ENCODE measurements at regions of chr17 and their contacts with region 1.

Region 1: DNA sequence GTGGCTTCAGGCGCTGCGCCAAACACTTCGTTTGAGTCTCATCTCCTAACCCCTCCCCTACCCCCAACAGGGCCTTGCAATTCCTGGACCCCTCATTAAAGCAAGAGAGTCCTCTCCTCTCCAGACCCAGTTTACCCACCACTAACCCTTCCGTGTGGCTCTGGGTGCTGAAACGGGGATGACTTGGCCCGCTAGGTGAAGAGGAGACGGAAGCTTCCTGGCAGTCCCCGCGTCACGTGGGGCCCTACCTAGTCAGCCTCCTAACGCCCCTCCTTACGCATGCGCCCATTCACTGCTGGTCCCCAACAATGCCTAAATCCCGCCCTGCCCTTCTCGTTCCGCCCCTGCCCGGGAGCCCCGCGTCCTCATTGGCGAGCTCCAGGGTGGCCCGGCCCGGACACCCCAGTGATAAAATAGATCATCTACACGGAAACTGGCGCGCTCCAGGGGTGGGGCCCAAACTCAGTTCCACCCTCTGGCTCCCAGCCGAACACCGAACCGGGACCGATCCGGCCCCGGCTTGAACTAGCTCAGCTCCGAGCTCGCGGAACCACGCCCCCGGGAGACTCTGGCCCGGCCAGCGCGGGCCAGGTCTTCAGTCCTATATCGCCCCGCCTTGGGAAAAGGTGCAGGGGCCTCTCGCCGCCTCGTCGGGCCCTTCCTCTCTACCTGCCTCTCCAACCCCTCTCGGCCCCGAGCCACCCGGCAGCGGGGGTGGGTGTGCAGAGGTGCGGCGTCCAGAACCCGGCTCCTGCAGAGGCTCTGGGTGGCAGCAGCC is at the start of gene SLC16A13:
- DNase-seq: peak; percentile 99
- H3K4me3 Mint-ChIP-seq: peak within 1 kb of the TSS; percentile 92
- H3K27ac Mint-ChIP-seq: peak within 1 kb of the TSS; percentile 92
- H3K4me1 Mint-ChIP-seq: peaks cover 21% of the 10 kb centered on the region
- H3K27me3 Mint-ChIP-seq: no peaks in the 10 kb centered on the region
- CTCF ChIP-seq: no peak
- total RNA-seq, gene SLC16A13: 7.5 and 11.1 TPM in 2 replicates

Region 2: GRCh38 chr17:6969323-6969726 is 66.5 kb before region 1 on chr17:
- CTCF ChIA-PET with region 1: no interaction called
- POLR2A ChIA-PET with region 1: no interaction called
- intact Hi-C with region 1: no loop called
- DNase-seq: peak; percentile 21
- H3K4me3 Mint-ChIP-seq: no peak overlapping the region
- H3K27ac Mint-ChIP-seq: no peak overlapping the region
- H3K4me1 Mint-ChIP-seq: no peaks in the 10 kb centered on the region
- H3K27me3 Mint-ChIP-seq: no peaks in the 10 kb centered on the region
- CTCF ChIP-seq: no peak

Region 3: GRCh38 chr17:6981426-6981825 is 54.4 kb before region 1 on chr17:
- CTCF ChIA-PET with region 1: no interaction called
- POLR2A ChIA-PET with region 1: no interaction called
- intact Hi-C with region 1: no loop called
- DNase-seq: no peak
- H3K4me3 Mint-ChIP-seq: no peak overlapping the region
- H3K27ac Mint-ChIP-seq: no peak overlapping the region
- H3K4me1 Mint-ChIP-seq: peaks cover 5% of the 10 kb centered on the region
- H3K27me3 Mint-ChIP-seq: no peaks in the 10 kb centered on the region
- CTCF ChIP-seq: no peak

Region 4: DNA sequence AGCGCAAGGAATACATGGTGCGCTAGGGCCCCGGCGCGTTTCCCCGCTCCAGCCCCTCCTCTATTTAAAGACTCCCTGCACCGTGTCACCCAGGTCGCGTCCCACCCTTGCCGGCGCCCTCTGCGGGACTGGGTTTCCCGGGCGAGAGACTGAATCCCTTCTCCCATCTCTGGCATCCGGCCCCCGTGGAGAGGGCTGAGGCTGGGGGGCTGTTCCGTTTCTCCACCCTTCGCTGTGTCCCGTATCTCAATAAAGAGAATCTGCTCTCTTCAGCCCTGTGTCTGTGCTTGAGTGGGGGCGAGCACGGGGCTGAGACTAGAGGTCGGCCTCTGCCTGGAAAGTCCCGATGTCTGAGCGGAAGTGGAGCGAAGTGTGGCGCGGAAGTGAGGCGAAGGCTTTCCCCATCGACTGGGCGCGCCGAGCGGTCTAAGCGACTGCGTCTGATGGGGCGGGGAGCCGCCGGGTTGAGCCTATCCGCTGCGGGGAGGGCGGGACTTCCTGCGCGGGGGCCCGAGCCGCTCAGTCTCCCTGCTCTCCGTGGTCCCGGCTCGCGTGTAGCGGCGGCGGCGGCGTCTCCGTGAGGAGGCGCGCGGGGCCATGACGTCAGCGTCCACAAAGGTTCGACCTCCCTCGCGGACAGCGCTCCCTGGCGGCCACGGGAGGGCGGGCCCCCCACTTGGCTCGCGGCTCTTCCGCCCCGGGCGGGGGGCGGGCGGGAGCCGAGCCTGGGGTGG is 21.4 kb before region 1 on chr17:
- CTCF ChIA-PET with region 1: no interaction called
- POLR2A ChIA-PET with region 1: interaction called, 21 read pairs
- intact Hi-C with region 1: no loop called
- DNase-seq: peak; percentile 96
- H3K4me3 Mint-ChIP-seq: peak overlapping the region; percentile 96
- H3K27ac Mint-ChIP-seq: peak overlapping the region; percentile 99
- H3K4me1 Mint-ChIP-seq: peaks cover 15% of the 10 kb centered on the region
- H3K27me3 Mint-ChIP-seq: no peaks in the 10 kb centered on the region
- CTCF ChIP-seq: peak; percentile 55

Region 5: DNA sequence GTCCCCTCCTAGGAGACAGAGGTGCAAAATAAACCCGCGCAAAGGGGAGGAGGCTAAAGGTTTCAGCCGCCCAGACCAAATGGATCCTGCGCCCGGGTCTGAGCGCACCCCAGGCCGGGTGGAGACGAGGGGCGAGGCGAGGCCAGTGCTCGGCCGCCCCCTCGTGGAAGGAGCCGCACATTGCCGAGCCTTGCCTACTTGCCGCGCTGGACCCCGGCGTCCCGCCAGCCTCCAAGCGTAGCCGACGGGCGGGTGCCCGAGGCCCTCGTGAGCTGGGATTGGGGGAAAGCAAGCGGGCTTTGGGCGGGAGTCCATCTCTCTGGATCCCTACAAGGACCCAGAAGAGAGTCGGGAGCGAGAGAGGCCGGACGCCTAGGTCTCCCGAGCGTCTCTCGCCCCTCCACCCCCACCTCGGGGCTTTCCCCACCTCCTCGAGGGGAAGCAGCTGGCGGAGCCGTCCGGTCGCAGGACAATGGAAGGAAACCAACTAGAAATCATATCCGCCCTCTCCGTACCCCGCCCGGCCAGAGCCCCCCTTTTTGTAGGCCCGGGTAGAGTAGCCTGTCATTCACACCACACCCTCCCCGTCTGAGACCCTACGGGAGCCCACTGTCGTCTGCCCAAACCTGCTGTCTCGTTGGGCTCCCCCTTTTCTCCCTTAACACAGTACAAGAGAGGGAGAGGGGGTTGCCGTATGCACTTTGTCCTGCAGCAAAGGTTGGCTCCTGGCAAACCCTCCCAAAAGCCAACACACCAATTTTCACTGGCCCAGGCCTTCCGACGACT is 13.6 kb before region 1 on chr17:
- CTCF ChIA-PET with region 1: interaction called, 7 read pairs
- POLR2A ChIA-PET with region 1: interaction called, 15 read pairs
- intact Hi-C with region 1: no loop called
- DNase-seq: peak; percentile 75
- H3K4me3 Mint-ChIP-seq: no peak overlapping the region
- H3K27ac Mint-ChIP-seq: no peak overlapping the region
- H3K4me1 Mint-ChIP-seq: peaks cover 23% of the 10 kb centered on the region
- H3K27me3 Mint-ChIP-seq: no peaks in the 10 kb centered on the region
- CTCF ChIP-seq: peak; percentile 84

Region 6: DNA sequence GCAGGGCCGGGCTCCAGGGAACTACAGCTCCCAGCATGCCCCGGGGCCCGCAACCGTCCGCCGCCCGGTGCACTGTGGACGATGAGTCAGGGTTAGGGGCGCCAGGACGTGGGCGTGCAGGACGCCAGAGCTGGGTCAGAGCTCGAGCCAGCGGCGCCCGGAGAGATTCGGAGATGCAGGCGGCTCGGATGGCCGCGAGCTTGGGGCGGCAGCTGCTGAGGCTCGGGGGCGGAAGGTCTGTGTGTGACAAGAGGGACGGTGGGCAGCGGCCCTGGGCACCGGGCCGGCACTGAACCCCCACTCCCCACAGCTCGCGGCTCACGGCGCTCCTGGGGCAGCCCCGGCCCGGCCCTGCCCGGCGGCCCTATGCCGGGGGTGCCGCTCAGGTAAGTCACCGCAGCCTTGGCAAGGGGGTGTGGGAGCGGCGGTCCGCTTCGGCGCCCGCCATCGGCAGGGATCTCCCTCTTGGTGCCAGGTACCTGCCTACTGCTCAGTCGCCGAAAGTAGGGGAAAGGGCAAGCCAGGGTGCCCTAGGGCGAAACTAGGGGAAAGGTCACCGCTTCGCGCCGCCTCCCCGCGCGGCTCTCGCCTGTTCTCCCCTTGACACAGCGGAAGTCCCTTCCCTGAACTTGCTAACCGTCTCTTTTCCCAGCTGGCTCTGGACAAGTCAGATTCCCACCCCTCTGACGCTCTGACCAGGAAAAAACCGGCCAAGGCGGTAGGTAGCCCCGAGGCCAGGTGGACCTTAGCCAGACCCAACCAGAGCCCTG is 184.2 kb after region 1 on chr17 and contains the starts of genes ACADVL and DLG4:
- CTCF ChIA-PET with region 1: no interaction called
- POLR2A ChIA-PET with region 1: interaction called, 17 read pairs
- intact Hi-C with region 1: no loop called
- DNase-seq: peak; percentile 94
- H3K4me3 Mint-ChIP-seq: peak within 1 kb of the TSS; percentile 86
- H3K27ac Mint-ChIP-seq: peak within 1 kb of the TSS; percentile 96
- H3K4me1 Mint-ChIP-seq: peaks cover 37% of the 10 kb centered on the region
- H3K27me3 Mint-ChIP-seq: no peaks in the 10 kb centered on the region
- CTCF ChIP-seq: no peak
- total RNA-seq, gene ACADVL: 387 and 413 TPM in 2 replicates
- total RNA-seq, gene DLG4: 7.6 TPM in 2 replicates

Measured in MCF 10A (cell line).